ENCODE measurements at regions of chr3 and their contacts with region 1.

Region 1: DNA sequence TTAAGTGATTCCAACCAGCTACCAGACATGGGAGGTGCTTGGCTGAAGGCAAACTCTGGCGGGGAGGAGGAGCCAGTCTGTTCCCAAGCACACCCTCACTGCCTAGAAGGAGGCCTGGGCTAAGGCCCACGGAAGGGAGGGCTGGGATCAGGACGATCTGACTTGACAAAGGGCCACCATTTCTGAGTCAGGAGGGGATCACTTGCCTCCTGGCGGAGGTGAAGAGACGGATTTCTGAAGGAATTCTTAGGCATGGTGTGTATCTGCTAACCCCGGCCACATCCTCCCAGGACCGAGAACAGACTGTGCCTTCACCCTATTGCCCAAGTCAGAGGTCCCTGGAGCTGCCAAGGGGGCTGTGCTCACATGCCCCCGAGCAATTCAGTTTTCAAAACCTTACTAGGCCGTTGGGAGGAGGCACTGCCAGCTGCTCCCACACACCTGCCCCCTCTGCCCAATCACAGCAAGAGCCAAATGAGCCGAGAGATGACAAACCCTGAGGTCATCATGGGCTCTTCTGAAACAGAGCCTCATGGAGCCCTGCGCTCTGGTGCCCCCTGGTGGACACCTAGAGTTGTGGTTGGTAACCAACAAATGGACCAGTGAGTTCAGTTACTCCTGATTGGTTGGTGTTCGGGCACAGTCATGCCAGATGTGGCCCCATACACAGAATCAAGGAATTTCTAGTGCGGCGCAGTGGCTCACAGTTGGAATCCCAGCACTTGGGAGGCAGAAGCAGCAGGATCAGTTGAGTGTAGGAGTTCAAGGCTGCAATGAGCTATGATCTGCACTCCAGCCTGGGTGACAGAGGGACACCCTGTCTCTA is 6.5 kb upstream of the TNK2 start:
- DNase-seq: peak; percentile 94
- ATAC-seq: peak; percentile 91

Region 2: DNA sequence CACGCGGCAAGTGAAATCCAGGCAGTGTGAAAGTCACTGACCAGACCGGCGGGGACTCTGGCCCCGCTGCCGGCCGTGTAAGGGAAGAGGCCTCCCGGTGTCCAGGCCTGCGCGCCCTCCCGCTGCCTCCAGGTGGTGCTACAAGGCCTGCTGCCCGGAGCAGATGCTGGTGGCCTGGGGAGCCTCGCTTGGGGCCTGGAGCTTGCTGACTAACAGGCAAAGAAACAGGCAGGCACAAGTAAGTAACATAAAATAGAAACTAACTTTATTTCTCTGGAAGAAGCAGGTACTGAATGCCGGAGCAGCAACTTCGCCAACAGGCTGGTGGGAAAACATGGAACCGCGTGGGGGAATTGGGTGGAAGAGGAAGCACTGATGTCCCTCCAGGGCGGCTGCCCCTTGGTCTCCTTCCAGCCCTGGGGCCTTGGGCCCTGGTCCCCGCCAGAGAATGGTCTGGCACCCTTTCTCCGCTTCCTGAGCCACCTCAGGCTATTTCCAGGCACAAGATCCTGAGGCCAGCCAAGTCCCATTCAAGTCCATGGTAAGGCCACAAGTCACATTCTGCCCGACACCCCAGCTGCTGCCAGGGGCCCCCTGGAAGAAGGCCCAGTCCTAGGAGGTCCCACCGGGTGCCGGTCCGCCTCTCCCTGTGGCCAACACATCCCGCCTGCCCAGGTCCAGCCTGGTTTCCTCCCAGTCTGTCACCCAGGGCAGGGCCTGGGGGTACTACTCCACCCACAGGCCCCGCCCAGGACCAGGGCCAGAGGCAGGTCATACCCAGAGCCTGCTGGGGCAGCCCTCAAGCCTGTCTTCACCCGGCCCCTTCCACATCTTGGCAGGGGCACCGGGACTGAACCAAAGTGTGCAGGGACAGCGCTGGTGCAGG is 51.5 kb before region 1 on chr3:
- intact Hi-C with region 1: loop called (anchors 1 kb)
- DNase-seq: peak; percentile 94
- ATAC-seq: peak; percentile 96

Region 3: DNA sequence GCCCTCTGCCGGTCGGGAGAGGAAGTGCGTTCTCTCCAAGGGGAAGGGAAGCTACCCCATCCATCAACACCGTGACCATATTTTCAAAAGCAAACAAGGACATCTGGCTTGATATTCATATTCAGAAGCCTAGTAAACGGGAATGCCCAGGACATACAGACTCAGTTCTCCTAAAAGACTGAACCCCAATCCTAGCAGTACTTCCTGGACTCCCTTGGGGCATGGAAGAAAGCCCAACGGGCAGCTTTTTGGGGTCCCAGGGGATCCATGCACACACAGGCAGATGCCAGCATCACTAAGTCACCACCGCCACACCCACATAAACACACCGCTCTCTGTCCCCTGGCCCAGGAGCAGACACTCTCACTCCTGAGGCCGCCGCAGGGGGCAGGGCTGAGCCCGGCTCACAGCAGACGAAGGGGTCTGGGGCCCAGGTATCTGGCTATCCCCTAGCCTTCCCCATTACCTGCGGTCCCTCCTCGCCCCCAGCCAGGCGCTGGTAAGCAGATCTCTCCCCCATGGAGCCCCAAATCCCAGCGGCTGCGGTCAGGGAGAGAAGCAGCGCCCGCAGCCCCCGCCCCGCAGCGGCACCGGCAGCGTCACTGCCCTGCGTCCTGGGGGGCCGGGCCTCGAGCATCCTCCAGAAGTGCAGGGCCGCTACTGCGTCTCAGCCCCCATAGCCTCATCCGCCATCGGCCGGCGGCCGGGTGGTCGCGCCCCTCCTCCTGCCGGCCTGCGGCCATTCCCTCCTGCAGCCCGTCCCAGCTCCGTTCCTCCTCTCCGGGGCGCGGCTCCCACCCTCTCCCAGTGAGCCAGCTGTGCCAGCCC is 19.9 kb before region 1 on chr3:
- intact Hi-C with region 1: loop called (anchors 2 kb)
- DNase-seq: peak; percentile 82
- ATAC-seq: peak; percentile 29

Measured in Right ventricle myocardium inferior (tissue), 1 donor.